ENCODE measurements at regions of chr18 and their contacts with region 1.

Region 1: GRCh38 chr18:43501099-43501498 is 223.8 kb upstream of the SYT4 start:
- DNase-seq: no peak
- H3K4me3 ChIP-seq: no peak overlapping the region
- H3K27ac ChIP-seq: no peak overlapping the region
- H3K4me1 ChIP-seq: no peaks in the 10 kb centered on the region
- H3K27me3 ChIP-seq: no peaks in the 10 kb centered on the region
- CTCF ChIP-seq: no peak
- EP300 ChIP-seq: no peak
- POLR2A ChIP-seq: no peak

Region 2: DNA sequence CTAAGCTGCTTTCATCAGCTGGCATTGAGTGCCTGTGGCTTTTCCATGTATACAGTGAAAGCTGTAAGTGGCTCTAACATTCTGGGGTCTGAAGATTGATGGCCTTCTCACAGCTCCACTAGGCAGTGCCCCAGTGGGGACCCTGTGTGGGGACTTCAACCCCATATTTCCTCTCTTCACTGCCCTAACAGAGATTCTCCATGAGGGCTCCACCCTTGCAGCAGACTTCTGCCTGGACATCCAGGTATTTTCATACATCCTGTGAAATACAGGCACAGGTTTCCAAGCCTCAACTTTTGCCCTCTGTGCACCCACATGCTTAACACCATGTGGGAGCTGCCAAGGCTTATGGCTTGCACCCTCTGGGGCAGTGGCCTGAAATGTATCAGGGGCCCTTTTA is 35.6 kb before region 1 on chr18:
- in situ Hi-C with region 1: loop called in 1 of 4 experiments (anchors 5 kb)
- intact Hi-C with region 1: no loop called
- DNase-seq: no peak
- H3K4me3 ChIP-seq: no peak overlapping the region
- H3K27ac ChIP-seq: no peak overlapping the region
- H3K4me1 ChIP-seq: no peaks in the 10 kb centered on the region
- H3K27me3 ChIP-seq: no peaks in the 10 kb centered on the region
- CTCF ChIP-seq: no peak
- EP300 ChIP-seq: no peak
- POLR2A ChIP-seq: no peak

Region 3: GRCh38 chr18:44180683-44181082 is 679.6 kb after region 1 on chr18:
- in situ Hi-C with region 1: no loop called
- intact Hi-C with region 1: no loop called
- DNase-seq: no peak
- H3K4me3 ChIP-seq: no peak overlapping the region
- H3K27ac ChIP-seq: no peak overlapping the region
- H3K4me1 ChIP-seq: no peaks in the 10 kb centered on the region
- H3K27me3 ChIP-seq: no peaks in the 10 kb centered on the region
- CTCF ChIP-seq: no peak
- EP300 ChIP-seq: no peak
- POLR2A ChIP-seq: no peak

Measured in transverse colon (tissue), 4 donors.